Activated CD4-positive, alpha-beta memory T cell treated with anti-CD3 and anti-CD28 coated beads for 36 hours (primary cell): ENCODE measurements at regions of chr16 and their contacts with region 1.

Region 1: GRCh38 chr16:57462209-57462977 is at the start of gene POLR2C:
- DNase-seq: peak; percentile 95
- H3K4me3 Mint-ChIP-seq: peak within 1 kb of the TSS; percentile 100
- H3K27ac Mint-ChIP-seq: peak within 1 kb of the TSS; percentile 98
- H3K4me1 Mint-ChIP-seq: peaks cover 34% of the 10 kb centered on the region
- H3K27me3 Mint-ChIP-seq: no peaks in the 10 kb centered on the region
- total RNA-seq, gene POLR2C: 52.5 to 57.0 TPM

Region 2: DNA sequence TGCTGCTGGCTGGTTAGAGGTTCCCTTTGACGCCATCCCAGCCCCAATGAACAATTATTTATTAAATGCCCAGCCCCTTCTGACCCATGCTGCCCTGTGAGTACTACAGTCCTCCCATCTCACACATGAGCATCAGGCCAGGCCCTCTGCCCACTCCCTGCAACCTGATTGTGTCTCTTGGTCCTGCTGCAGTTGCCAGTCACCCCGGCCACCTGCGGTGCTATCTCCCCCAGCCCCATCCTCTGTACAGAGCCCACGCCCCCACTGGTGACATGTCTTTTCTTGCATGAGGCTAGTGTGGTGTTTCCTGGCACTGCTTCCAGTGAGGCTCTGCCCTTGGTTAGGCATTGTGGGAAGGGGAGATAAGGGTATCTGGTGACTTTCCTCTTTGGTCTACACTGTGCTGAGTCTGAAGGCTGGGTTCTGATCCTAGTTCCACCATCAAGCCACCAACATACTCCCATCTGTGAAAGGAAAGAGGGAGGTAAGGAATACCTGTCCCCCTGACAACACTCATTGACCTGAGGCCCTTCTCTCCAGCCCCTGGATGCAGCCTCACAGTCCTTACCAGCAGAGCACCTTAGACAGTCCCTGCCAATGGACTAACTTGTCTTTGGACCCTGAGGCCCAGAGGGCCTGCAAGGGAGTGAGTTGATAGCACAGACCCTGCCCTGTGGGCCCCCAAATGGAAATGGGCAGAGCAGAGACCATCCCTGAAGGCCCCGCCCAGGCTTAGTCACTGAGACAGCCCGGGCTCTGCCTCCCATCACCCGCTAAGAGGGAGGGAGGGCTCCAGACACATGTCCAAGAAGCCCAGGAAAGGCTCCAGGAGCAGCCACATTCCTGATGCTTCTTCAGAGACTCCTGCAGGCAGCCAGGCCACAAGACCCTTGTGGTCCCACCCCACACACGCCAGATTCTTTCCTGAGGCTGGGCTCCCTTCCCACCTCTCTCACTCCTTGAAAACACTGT is 78.8 kb before region 1 on chr16:
- CTCF ChIA-PET with region 1: no interaction called
- POLR2A ChIA-PET with region 1: no interaction called
- intact Hi-C with region 1: no loop called
- DNase-seq: no peak
- H3K4me3 Mint-ChIP-seq: no peak overlapping the region
- H3K27ac Mint-ChIP-seq: no peak overlapping the region
- H3K4me1 Mint-ChIP-seq: peaks cover 5% of the 10 kb centered on the region
- H3K27me3 Mint-ChIP-seq: no peaks in the 10 kb centered on the region

Region 3: DNA sequence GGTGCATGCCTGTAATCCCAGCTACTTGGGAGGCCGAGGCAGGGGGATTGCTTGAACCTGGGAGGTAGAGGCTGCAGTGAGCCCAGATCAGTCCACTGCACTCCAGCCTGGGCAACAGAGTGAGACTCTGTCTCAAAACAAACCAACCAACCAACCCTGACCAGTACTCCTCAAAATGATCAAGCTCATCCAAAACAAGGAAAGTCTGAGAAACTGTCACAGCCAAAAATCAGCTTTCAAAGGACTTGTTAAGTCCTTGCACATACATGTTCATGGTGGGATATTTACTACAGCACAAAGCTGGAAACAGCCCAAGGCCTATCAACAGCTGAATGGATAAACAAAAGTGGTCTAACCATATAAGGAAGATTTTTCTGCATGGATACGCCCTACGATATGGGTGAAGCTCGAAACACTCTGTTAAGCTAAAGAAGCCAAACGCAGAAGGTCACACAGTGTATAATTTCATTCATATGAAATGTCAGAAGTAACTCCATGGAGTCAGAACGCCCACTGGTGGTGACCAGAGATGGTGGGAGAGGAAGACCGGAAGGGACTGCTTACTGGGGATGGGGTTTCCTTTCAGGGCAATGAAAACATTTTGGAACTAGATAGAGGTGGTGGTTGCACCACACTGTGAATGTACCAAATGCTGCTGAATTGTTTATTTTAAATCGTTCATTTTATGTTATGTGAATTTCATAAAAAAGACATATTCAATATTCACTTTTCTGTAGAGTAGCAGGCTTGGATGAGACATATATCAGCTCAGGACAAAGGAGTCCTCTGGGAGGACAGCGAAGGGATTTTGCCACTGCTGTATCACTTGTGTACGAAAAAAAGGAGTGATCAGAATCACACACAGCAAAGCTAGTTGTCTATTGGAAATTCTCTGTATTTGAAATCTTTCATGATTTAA is 40.1 kb before region 1 on chr16:
- CTCF ChIA-PET with region 1: interaction called, 12 read pairs
- POLR2A ChIA-PET with region 1: interaction called, 4 read pairs
- intact Hi-C with region 1: no loop called
- DNase-seq: no peak
- H3K4me3 Mint-ChIP-seq: no peak overlapping the region
- H3K27ac Mint-ChIP-seq: no peak overlapping the region
- H3K4me1 Mint-ChIP-seq: peaks cover 6% of the 10 kb centered on the region
- H3K27me3 Mint-ChIP-seq: no peaks in the 10 kb centered on the region

Region 4: DNA sequence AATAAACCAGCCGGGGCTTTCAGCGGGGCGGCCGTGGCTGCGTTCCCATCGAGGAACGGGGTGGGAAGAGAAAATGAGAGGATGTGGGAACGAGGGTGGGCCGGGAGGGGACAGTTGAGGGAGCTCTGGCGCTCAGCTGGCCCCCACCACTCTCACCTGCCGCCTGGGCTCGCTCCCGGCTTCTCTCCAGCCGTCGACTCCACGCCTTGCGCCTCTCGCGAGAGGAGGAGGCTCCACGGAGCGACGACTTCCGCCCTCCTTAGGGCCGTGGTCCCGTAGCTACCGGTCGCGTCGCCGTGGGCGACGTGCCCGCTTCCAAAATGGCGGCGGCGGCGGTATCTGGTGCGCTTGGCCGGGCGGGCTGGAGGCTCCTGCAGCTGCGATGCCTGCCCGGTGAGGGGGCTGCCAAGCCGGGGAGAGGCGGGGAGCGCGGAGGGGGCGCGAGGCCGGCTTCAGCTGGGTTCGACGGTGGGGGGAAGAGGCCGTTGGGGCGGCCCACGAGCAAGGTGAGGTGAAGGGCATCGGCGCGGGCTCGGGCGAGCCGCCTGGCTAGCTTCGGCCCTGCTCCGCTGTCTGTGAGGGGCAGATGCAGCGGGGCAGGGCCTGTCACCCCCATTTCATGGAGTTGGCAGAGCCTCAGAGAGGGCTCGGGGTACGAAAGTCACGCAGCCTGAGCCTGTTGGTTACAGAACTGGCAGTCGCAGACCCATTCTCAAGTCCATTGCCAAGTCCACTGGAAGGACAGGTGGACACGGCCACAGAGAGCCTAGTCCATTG is 15.0 kb before region 1 on chr16 and contains the starts of genes CIAPIN1 and COQ9:
- CTCF ChIA-PET with region 1: interaction called, 51 read pairs
- POLR2A ChIA-PET with region 1: interaction called, 26 read pairs
- intact Hi-C with region 1: loop called (anchors 1 kb)
- DNase-seq: peak; percentile 96
- H3K4me3 Mint-ChIP-seq: peak within 1 kb of the TSS; percentile 91
- H3K27ac Mint-ChIP-seq: peak within 1 kb of the TSS; percentile 70
- H3K4me1 Mint-ChIP-seq: peaks cover 28% of the 10 kb centered on the region
- H3K27me3 Mint-ChIP-seq: no peaks in the 10 kb centered on the region
- total RNA-seq, gene CIAPIN1: 34.8 to 38.5 TPM
- total RNA-seq, gene COQ9: 29.8 to 33.0 TPM

Region 5: GRCh38 chr16:57475711-57476339 is 13.4 kb after region 1 on chr16:
- CTCF ChIA-PET with region 1: interaction called, 26 read pairs
- POLR2A ChIA-PET with region 1: interaction called, 6 read pairs
- intact Hi-C with region 1: loop called (anchors 1 kb)
- DNase-seq: peak; percentile 96
- H3K4me3 Mint-ChIP-seq: peak overlapping the region; percentile 6
- H3K27ac Mint-ChIP-seq: peak overlapping the region; percentile 45
- H3K4me1 Mint-ChIP-seq: peaks cover 14% of the 10 kb centered on the region
- H3K27me3 Mint-ChIP-seq: no peaks in the 10 kb centered on the region

Region 6: GRCh38 chr16:57485916-57486857 is 23.8 kb after region 1 on chr16 and contains the start of gene DOK4:
- CTCF ChIA-PET with region 1: interaction called, 21 read pairs
- POLR2A ChIA-PET with region 1: interaction called, 13 read pairs
- intact Hi-C with region 1: no loop called
- DNase-seq: peak; percentile 85
- H3K4me3 Mint-ChIP-seq: peak within 1 kb of the TSS; percentile 79
- H3K27ac Mint-ChIP-seq: peak within 1 kb of the TSS; percentile 64
- H3K4me1 Mint-ChIP-seq: peaks cover 11% of the 10 kb centered on the region
- H3K27me3 Mint-ChIP-seq: no peaks in the 10 kb centered on the region
- total RNA-seq, gene DOK4: 5.5 to 7.1 TPM

Region 7: DNA sequence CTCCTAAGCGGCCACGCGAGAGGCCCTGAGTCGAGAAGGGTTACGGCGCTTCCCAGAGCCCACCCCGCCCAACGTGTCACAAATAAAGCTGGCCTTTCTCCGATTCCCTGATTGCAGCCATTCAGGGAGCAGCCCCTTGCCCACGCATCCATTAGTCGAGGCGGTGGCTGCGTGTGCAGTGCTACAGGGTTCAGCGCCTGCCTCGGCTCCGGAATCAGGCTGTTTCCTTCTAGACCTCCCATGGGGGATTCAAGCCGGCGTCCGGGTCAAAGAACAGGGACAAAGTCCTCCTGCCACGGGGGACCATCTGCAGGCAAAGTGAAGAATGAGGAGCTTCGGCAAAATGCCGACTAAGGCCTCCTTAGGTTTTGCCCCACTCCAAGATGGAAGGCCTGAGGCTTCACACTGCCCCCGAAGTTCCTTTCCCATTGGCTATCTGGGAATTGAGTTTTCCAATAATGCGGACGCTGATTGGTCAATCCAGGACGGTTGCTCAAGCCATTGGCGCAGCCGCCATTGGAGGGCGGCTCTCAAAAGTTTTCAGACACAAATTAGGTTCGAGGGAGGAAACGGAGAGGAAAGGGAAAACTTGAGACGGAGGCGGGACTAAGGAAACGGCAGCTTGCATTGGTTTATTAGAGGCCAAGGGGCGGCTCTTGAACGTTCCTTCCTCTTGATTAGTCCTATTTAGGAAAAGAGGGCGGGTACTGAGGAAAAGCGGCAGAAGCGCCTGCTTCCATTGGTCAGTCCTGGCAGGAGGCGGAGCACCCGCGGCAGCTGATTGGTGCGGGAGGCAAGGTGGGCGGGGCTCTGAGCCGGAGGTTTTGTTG is 272.7 kb after region 1 on chr16:
- CTCF ChIA-PET with region 1: no interaction called
- POLR2A ChIA-PET with region 1: no interaction called
- intact Hi-C with region 1: loop called (anchors 5 kb)
- DNase-seq: peak; percentile 98
- H3K4me3 Mint-ChIP-seq: peak overlapping the region; percentile 99
- H3K27ac Mint-ChIP-seq: peak overlapping the region; percentile 87
- H3K4me1 Mint-ChIP-seq: peaks cover 27% of the 10 kb centered on the region
- H3K27me3 Mint-ChIP-seq: peaks cover 2% of the 10 kb centered on the region